ENCODE measurements at regions of chr2 and their contacts with region 1.

Region 1: DNA sequence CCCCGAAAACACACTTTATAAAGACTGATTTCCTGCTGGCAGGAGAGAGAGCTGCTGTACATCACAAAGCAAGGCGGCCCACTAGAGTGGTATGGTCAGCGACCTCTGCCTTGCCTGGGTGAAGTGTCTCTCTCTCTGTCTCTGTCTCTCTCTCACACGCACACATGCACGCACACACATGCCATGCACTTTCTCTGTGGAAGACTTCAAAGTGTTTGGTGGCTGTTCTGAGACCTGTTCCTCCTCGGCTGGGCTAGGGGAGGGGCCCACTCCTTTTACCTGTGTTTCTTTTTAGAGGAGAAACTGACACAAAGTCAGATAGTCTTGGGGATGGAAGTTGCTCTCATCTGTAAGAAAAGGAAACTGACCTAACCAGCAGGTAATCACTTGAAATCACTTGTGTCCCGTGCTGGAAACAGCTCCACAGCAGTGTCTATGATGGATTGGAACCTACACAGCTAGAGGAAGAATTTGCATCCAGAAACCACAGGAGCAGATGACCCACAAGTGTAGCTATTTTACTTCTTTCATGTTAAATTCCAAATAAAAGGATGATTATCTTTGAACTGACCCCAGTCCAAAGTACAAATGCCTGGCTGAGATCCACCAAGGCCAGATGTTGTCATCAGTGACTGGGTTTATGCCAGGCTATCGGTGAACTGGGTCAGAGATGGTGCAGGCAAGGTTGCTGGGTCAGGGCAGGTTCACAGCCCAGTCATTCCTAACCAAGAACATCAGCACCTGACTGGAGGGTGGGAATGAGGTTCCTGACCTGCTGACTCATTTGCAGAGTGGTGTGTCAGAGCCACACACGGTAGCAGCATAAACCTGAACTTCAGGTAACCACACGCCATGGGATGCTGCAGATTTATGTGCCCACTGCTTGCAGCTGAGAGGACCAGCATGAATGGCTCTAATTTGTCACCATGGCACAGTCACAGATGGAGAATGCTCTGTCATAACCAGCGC is 63.0 kb downstream of the NPAS2 start:
- DNase-seq: no peak
- H3K4me3 ChIP-seq: no peak overlapping the region
- H3K27ac ChIP-seq: no peak overlapping the region
- H3K4me1 ChIP-seq: peaks cover 0 to 28% (median 16%) of the 10 kb centered on the region in 4 donors
- H3K27me3 ChIP-seq: no peaks in the 10 kb centered on the region
- CTCF ChIP-seq: no peak
- EP300 ChIP-seq: no peak
- POLR2A ChIP-seq: no peak

Region 2: DNA sequence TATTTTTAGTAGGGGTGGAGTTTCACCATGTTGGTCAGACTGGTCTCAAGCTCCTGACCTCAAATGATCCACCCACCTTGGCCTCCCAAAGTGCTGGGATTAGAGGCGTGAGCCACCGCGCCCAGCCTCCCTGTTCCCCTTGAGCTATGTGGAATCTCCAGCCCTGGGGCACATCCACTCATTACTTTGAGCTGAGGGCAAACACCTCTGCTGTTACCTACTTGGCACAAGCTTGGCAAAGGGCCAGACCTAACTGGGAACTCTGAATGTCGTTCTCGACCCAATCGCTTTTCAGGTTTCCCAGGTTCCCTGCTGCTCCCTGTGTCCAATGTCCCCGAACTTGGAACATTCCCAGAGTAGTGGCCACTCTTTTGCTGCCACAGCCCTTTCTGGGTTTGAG is 506.1 kb before region 1 on chr2:
- intact Hi-C with region 1: no loop called
- DNase-seq: no peak
- H3K4me3 ChIP-seq: no peak overlapping the region
- H3K27ac ChIP-seq: no peak overlapping the region
- H3K4me1 ChIP-seq: no peaks in the 10 kb centered on the region
- H3K27me3 ChIP-seq: no peaks in the 10 kb centered on the region
- CTCF ChIP-seq: no peak
- EP300 ChIP-seq: no peak
- POLR2A ChIP-seq: no peak

Region 3: GRCh38 chr2:100742277-100743254 is 140.4 kb before region 1 on chr2:
- intact Hi-C with region 1: no loop called
- DNase-seq: peak; percentile 72
- H3K4me3 ChIP-seq: peak overlapping the region in 1 of 4 donors; percentile 5
- H3K27ac ChIP-seq: peak overlapping the region; percentile 47 to 82 (median 64)
- H3K4me1 ChIP-seq: peaks cover 0 to 33% (median 17%) of the 10 kb centered on the region in 4 donors
- H3K27me3 ChIP-seq: no peaks in the 10 kb centered on the region
- CTCF ChIP-seq: no peak
- EP300 ChIP-seq: no peak
- POLR2A ChIP-seq: no peak

Region 4: DNA sequence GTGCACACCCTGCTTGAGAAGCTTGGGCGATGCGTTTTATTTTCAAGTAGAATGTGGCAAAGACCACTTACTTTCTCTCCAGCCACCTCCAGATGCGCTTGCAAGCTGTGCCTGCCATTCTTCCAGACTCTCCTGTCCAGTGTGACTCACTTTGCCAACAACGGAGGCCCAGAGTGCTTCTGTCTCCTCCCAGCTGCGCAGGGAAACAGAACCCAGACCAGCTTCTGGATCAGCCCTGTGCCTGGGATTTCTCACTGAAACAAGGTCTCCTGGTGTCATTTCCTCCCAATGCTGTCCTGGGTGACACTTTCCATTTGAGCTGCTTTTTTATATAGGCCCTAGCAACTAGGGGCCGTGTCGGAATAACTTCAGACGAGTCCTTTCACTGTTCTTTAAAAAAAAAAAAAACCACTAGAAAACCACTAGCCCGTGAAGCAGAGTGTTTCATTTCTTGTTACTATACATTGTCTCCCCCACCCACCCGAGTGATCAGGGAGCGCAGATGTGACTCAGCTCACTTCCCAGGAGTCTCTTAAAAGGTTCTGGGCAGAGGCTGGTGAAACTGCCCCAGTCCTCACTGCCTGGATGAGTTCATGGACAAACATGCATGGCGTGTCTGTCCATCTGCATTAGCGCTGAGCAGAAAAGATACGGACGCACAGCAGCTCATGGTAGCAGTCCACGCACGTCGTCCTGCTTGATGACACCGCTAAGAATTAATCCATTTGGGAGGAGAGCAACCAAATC is 93.9 kb after region 1 on chr2:
- intact Hi-C with region 1: loop called (anchors 10 kb)
- DNase-seq: peak; percentile 83
- H3K4me3 ChIP-seq: no peak overlapping the region
- H3K27ac ChIP-seq: peak overlapping the region in 3 of 4 donors; percentile 70 to 83 (median 73)
- H3K4me1 ChIP-seq: peaks cover 0 to 33% (median 29%) of the 10 kb centered on the region in 4 donors
- H3K27me3 ChIP-seq: no peaks in the 10 kb centered on the region
- CTCF ChIP-seq: no peak
- EP300 ChIP-seq: peak in 2 of 4 donors; percentile 36 to 50
- POLR2A ChIP-seq: no peak

Measured in sigmoid colon (tissue), 7 donors.